ENCODE measurements at regions of chr7 and their contacts with region 1.

Region 1: GRCh38 chr7:1669954-1670893 is at the start of gene ELFN1:
- DNase-seq: peak in 1 of 2 donors; percentile 52
- ATAC-seq: peak in 3 of 8 donors; percentile 9 to 27 (median 16)
- H3K4me3 ChIP-seq: peak within 1 kb of the TSS; percentile 41 to 56 (median 50)
- H3K27ac ChIP-seq: peak within 1 kb of the TSS in 6 of 10 donors; percentile 44 to 91 (median 76)
- H3K4me1 ChIP-seq: peaks cover 13 to 52% (median 41%) of the 10 kb centered on the region in 9 donors
- H3K27me3 ChIP-seq: peaks cover 0 to 83% (median 37%) of the 10 kb centered on the region in 7 donors
- CTCF ChIP-seq: no peak
- total RNA-seq, gene ELFN1: 3.4 to 9.5 (median 6.4) TPM

Region 2: DNA sequence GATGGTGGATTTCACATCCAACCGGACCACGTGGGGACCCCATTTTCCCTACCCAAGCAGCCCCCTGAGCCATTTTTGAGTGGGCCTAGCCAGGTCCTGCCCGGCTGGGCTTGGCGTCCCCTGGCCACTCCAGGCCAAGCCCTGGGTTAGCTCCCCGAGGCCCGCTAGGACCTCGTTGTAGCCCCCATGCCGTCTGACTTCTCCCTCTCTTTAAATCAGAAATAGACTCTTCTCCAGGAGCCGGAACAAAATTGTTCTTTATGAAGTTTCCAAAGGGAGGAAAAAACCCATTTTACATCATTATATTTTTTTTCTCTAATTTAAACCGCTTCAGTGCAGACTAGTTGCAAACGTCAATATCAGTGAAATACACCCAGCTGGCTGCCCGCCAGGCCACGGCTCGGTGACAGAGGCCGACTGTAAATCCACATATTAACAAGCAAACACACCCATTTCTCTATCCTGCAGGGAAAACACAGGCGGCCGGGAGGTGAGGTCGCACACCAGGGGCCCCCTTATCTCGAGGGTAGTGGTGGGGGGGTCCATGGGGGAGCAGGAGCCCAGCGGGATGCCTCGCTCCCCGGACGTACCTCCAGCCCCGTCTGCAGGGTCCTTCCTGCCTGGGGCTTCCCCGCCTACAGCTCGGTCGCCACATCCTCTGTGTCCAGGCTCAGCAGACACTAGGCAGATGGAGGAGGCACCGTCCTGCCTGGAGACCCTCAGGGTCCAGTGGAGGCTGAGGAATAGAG is 72.5 kb after region 1 on chr7:
- intact Hi-C with region 1: loop called in 3 of 10 experiments (anchors 2 to 5 kb)
- DNase-seq: peak; percentile 66 to 74
- ATAC-seq: peak in 6 of 8 donors; percentile 8 to 78 (median 62)
- H3K4me3 ChIP-seq: peak overlapping the region in 6 of 10 donors; percentile 23 to 37 (median 32)
- H3K27ac ChIP-seq: peak overlapping the region in 8 of 10 donors; percentile 10 to 56 (median 38)
- H3K4me1 ChIP-seq: peaks cover 3 to 27% (median 24%) of the 10 kb centered on the region in 9 donors
- H3K27me3 ChIP-seq: peaks cover 0 to 5% (median 0%) of the 10 kb centered on the region in 7 donors
- CTCF ChIP-seq: no peak

Region 3: GRCh38 chr7:1758028-1758858 is 88.0 kb after region 1 on chr7:
- intact Hi-C with region 1: loop called in 8 of 10 experiments (anchors 2 to 10 kb)
- DNase-seq: peak; percentile 46 to 56
- ATAC-seq: peak; percentile 64 to 87 (median 80)
- H3K4me3 ChIP-seq: no peak overlapping the region
- H3K27ac ChIP-seq: peak overlapping the region in 5 of 10 donors; percentile 50 to 71 (median 64)
- H3K4me1 ChIP-seq: peaks cover 0 to 13% (median 0%) of the 10 kb centered on the region in 9 donors
- H3K27me3 ChIP-seq: peaks cover 0 to 7% (median 0%) of the 10 kb centered on the region in 7 donors
- CTCF ChIP-seq: peak; percentile 23 to 60 (median 49)

Measured in heart right ventricle (tissue), 16 donors.